ENCODE measurements at regions of chr1 and their contacts with region 1.

Region 1: DNA sequence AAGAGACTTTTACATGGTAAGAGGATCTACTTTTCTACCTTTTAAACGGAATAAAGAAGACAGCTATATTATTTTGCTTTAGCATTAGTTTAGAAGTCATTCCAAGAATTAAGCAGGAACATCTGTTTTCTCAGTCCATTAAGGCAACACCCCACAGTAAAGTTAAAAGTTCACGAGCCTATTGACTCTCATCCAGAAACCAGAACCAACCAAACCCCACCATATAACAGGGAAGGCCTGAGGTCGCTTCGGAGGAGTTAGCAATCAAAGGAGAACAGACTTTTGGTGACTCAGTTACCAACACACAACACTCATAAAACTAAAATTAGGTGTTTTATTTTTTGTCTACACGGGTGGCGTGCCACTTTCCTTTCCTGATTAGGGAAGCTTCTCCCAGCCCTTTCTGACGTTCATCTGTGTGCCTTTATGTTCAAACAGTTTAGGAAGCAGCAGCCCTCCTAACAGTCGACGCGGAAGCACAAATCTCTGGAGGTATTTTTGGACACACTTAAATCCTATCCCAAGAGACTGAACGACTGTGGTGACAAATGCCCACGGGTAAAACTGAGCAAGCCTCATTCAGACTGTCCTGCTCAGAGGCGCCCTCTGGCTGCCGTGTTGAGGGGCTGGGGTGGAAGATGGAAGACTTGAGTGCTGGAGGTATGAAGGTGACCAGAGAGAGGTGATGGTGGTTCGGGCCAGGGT is 8.6 kb upstream of the PLA2G2C start:
- DNase-seq: peak; percentile 77
- ATAC-seq: peak; percentile 64
- H3K4me3 Mint-ChIP-seq: no peak overlapping the region
- H3K27ac Mint-ChIP-seq: no peak overlapping the region
- H3K4me1 Mint-ChIP-seq: no peaks in the 10 kb centered on the region
- H3K27me3 Mint-ChIP-seq: peaks cover 51% of the 10 kb centered on the region

Region 2: DNA sequence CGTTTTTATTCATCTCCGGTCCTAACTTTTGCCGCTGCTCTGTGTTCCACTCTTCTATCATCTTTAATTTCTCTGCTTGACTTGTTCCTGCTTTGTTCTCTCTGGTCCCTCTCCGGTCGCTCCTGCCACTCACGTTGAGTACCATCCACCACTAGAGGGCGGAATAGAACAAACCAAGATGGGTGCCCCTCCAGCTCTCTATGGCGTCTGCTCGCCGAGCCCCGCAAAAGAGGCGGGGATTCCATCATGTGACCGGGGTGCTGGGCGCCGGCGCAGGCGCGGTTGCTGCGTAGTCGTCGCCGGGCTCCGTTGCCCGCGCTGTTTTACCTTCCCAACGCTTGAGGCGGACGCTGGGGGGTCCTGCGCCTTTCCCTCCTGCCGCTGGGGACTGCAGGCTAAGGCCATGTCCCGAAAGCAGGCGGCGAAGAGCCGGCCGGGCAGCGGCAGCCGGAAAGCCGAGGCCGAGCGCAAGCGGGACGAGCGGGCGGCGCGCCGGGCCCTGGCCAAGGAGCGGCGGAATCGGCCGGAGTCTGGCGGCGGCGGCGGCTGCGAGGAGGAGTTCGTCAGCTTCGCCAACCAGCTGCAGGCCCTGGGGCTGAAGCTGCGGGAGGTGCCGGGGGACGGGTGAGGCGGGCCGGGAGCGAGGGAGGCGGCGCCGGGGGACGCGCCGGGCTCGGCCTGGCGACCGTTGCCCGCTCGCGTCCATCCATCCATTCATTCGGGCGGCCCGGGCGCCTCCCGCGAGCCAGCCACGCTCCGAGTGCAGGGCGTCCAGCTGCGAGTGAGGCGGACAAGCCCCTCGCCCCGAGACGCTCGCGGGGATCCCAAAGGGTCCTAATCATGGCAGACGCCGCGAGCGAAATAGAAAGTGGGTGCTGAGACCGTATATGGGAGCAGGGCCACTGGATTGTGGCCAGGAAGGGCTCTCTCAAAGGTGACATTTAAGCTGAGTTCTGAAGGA is 312.5 kb before region 1 on chr1 and contains the start of gene OTUD3:
- CTCF ChIA-PET with region 1: no interaction called
- DNase-seq: peak; percentile 97
- ATAC-seq: peak; percentile 96
- H3K4me3 Mint-ChIP-seq: peak within 1 kb of the TSS; percentile 79
- H3K27ac Mint-ChIP-seq: peak within 1 kb of the TSS; percentile 22
- H3K4me1 Mint-ChIP-seq: peaks cover 28% of the 10 kb centered on the region
- H3K27me3 Mint-ChIP-seq: peaks cover 10% of the 10 kb centered on the region
- total RNA-seq, gene OTUD3: 7.3 to 8.1 TPM

Region 3: GRCh38 chr1:19918057-19918456 is 276.9 kb before region 1 on chr1:
- CTCF ChIA-PET with region 1: interaction called, 18 read pairs
- DNase-seq: peak; percentile 84
- ATAC-seq: peak; percentile 74
- H3K4me3 Mint-ChIP-seq: no peak overlapping the region
- H3K27ac Mint-ChIP-seq: no peak overlapping the region
- H3K4me1 Mint-ChIP-seq: no peaks in the 10 kb centered on the region
- H3K27me3 Mint-ChIP-seq: no peaks in the 10 kb centered on the region

Region 4: DNA sequence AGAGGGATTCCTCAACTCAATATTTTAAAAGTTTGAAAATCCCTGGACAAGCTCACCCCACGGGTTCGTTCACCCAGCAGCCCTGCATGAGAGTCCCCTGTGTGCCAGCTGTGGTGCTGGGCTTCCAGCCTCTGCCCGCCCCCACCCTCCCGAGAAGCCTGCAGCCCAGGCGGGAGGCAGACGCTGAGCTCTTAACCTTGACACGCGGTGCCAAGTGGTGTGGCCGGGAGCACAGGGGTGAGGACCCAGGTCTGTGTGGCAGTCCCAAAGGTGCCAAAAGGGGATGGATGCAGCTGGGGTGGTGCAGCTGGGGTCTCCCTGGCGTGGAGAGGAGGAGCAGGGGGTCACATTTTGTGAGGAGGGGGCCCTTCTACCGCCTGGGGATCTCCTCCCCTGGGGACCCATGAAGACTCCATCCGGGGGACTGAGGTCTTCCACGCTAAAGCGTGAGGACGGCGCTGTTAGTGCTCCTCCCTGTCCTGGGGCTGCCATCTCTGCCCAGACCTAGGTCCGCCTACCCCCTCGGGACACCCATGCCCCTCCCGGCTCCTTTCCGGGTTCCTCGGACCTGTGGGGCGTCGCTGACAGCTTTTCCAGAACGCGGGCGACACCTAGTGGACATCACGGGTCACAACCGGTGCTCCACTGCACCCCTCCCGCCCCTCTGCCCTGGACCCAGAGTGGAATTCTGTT is 42.9 kb before region 1 on chr1:
- CTCF ChIA-PET with region 1: interaction called, 28 read pairs
- DNase-seq: peak; percentile 84
- ATAC-seq: peak; percentile 92
- H3K4me3 Mint-ChIP-seq: peak overlapping the region; percentile 54
- H3K27ac Mint-ChIP-seq: peak overlapping the region; percentile 51
- H3K4me1 Mint-ChIP-seq: peaks cover 16% of the 10 kb centered on the region
- H3K27me3 Mint-ChIP-seq: no peaks in the 10 kb centered on the region

Region 5: DNA sequence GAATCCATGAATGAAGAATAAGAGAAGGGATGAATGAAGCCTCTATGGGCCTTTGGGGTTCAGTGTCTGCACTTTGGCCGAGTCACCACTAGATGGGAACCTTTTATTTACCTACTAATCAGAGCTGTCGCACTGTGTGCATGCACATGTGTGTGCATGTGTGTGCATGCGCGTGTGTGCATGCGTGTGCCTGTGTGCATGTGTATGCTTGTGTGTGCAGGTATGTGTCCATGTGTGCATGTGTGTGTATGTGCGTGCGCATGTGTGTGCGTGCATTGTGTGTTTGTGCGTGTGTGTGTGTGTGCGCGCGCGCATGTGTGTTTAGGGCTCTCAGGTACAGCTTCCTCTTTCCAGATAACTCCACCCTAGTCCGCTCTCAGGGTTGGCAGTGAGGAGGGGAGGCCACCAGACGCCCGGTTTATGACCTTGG is 29.4 kb before region 1 on chr1:
- CTCF ChIA-PET with region 1: interaction called, 35 read pairs
- DNase-seq: no peak
- ATAC-seq: peak; percentile 60
- H3K4me3 Mint-ChIP-seq: no peak overlapping the region
- H3K27ac Mint-ChIP-seq: no peak overlapping the region
- H3K4me1 Mint-ChIP-seq: peaks cover 3% of the 10 kb centered on the region
- H3K27me3 Mint-ChIP-seq: no peaks in the 10 kb centered on the region

Region 6: DNA sequence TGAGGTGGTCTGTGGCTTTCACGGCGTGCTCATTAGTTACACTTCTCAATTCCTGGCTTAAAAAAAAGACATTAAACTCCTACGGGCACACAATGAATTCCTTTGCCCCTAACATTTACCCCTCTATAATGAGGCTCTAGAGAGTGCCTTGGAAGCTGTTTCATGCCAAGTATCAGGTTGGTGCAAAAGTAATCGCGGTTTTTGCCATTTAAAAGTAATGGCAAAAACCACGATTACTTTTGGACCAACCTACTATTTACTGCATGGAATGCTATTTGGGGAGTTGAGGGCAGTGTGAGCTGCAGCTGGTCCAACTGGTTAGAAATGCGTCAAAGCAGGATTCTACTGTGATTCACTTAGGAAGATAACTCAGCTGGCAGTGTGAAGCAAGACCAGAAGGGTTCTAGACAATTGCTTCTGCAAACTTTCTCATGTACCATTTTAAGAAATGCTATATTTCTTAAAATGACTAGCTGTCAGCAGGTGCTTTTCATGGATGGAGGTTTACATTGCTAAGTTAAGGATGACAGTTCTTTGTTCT is 12.6 kb after region 1 on chr1:
- CTCF ChIA-PET with region 1: interaction called, 26 read pairs
- DNase-seq: no peak
- ATAC-seq: no peak
- H3K4me3 Mint-ChIP-seq: no peak overlapping the region
- H3K27ac Mint-ChIP-seq: no peak overlapping the region
- H3K4me1 Mint-ChIP-seq: peaks cover 1% of the 10 kb centered on the region
- H3K27me3 Mint-ChIP-seq: peaks cover 40% of the 10 kb centered on the region

Region 7: DNA sequence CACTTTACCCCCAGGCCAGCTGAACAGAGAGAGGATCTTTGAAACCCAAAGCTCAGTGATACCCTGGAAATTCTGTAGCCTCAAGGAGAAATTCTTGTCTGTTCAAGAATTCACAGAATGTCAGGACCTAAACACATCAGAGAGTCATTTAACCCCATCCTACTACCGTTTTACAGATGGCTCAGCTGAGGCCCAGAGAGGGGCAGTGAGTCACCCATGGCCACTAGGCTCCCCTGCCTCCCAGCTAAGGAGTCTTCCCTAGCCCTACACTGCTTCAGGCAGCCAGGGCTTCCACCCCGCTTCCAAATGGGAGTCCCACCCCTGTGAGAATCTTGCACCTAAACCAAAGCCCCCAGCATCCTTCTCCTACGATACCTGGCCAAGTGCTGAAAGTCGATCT is 124.1 kb after region 1 on chr1:
- CTCF ChIA-PET with region 1: no interaction called
- DNase-seq: no peak
- ATAC-seq: no peak
- H3K4me3 Mint-ChIP-seq: no peak overlapping the region
- H3K27ac Mint-ChIP-seq: no peak overlapping the region
- H3K4me1 Mint-ChIP-seq: peaks cover 21% of the 10 kb centered on the region
- H3K27me3 Mint-ChIP-seq: peaks cover 12% of the 10 kb centered on the region

Measured in activated CD8-positive, alpha-beta memory T cell treated with anti-CD3 and anti-CD28 coated beads, Interleukin-2, amount 10 ng/mL, durations not matched to agents 7 days and 5 days (primary cell).